Transverse colon (tissue), 4 donors: ENCODE measurements at regions of chr6 and their contacts with region 1.

Region 1: GRCh38 chr6:134640975-134641429 is 308.9 kb downstream of the ALDH8A1 start:
- DNase-seq: peak; percentile 84
- H3K4me3 ChIP-seq: no peak overlapping the region
- H3K27ac ChIP-seq: peak overlapping the region in 2 of 4 donors; percentile 24 to 38
- H3K4me1 ChIP-seq: peaks cover 0 to 40% (median 10%) of the 10 kb centered on the region in 4 donors
- H3K27me3 ChIP-seq: no peaks in the 10 kb centered on the region
- CTCF ChIP-seq: peak; percentile 84 to 98 (median 89)
- EP300 ChIP-seq: no peak
- POLR2A ChIP-seq: no peak

Region 2: DNA sequence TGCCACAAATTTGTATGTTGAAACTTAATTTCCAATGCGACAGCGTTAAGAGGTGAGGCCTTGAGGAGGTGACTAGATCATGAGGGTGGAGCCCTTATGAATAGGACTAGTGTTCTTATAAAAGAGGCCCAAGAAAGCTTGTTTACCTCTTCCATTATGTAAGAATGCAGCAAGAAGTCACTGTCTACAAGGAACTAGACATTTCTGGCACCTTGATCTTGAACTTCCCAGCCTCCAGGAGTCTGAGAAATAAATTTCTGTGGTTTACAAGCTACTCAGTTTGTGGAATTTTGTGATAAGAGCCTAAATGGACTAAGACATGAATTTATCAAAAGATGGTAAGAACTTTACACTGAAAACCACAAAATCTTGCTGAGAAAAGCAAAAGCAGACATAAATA is 149.5 kb before region 1 on chr6:
- in situ Hi-C with region 1: no loop called
- intact Hi-C with region 1: no loop called
- DNase-seq: no peak
- H3K4me3 ChIP-seq: no peak overlapping the region
- H3K27ac ChIP-seq: no peak overlapping the region
- H3K4me1 ChIP-seq: no peaks in the 10 kb centered on the region
- H3K27me3 ChIP-seq: no peaks in the 10 kb centered on the region
- CTCF ChIP-seq: no peak
- EP300 ChIP-seq: no peak
- POLR2A ChIP-seq: no peak

Region 3: DNA sequence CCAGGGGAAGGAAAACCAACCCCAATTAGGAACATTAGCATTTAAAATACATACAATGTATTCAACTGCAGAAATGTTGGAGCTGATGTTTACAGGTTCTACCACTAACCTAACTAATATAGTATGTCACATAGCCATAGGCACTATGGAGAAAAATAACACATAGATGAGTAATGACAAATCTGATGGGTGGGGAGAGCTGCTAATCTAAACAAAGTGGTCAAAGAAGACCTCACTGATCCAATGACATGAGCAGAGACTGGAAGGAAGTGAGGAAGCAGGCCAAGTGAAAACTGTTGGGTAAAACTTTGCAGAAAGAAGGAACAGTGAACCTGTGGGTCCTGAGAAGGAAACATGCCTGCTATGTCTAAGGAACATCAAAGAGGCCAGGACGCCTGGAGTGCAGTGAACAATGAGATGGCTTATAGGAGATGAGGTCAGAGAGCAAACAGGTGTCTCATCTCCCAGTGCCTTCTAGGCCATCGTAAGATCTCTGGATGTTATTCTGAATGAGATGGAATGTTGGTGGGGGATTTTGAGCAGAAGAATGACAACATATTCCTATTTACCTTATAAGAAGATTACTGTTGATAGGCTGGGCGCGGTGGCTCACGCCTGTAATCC is 173.2 kb after region 1 on chr6:
- in situ Hi-C with region 1: loop called in 1 of 4 experiments (anchors 10 kb)
- intact Hi-C with region 1: no loop called
- DNase-seq: no peak
- H3K4me3 ChIP-seq: no peak overlapping the region
- H3K27ac ChIP-seq: no peak overlapping the region
- H3K4me1 ChIP-seq: no peaks in the 10 kb centered on the region
- H3K27me3 ChIP-seq: no peaks in the 10 kb centered on the region
- CTCF ChIP-seq: no peak
- EP300 ChIP-seq: no peak
- POLR2A ChIP-seq: no peak